Common myeloid progenitor, CD34-positive (primary cell): ENCODE measurements at regions of chr14 and their contacts with region 1.

Region 1: DNA sequence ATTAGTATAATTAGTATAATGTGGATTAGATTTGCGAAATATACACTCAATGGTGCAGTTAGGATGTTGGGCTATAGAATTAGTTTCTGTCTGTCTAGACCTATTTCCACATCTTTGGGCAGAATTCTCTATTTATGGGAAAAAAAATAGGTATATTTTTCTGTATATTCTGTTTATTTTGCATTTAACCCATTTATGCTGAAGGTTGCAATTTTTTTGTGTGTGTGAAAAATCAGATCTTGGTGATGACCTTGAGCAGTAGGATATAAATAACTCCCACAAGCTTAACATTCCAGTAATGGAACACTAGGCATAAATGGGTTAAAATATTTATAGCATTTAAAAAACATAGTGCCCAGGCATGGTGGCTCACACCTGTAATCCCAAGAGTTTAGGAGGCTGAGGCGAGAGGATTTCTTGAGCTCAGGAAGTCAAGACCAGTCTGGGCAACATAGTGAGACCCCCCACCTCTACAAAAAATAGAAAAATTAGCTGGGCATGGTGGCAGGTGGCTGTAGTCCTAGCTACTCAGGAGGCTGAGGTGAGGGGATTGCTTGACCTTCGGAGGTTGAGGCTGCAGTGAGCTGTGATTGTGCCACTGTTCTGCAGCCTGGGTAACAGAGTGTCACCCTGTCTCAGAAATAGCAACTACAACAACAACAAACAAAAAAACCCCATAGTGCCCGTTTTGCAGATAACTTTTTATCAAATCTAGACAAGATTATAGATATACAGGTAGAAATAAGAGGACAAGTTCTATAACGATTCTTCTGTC is 9.3 kb downstream of the BRMS1L start:
- DNase-seq: no peak
- H3K4me3 ChIP-seq: no peak overlapping the region
- H3K27ac ChIP-seq: no peak overlapping the region
- H3K4me1 ChIP-seq: no peaks in the 10 kb centered on the region
- H3K27me3 ChIP-seq: no peaks in the 10 kb centered on the region

Region 2: DNA sequence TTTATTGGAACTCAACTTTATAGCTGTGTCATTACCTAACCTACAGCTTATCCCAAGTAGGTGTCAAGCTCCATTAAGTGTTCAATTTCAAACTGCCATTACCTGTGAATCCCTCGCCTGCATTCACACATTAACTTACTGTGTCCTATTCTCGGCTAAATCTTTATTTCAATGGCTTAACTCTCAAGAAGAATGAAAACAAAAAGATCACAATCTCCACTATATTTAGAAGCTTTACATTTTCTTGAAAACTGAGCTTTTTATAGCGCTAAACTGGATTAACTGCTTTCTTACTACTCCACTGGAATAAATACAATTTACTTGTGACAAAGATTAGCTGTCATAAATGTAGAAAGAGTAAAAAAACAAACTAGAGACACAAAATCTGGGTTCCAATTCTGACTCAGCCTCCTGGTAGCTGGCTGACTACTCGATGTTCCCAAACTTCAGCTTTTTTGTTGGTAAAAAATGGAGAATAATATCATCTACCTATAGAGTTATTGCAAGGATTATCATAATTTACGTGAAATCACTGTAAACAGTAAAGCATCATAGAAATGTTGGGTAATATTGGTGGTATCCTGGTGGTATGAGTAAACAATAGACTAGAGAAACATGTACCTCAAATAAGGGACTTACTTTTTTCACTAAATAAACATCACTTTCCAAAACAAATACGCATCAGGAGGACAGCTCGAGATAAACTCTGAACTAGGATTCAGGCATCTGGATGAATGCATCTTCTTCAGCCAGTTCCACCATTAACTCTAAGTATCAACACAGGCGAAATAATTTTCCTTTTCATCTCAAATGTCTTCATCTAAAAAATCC is 28.0 kb before region 1 on chr14:
- CTCF ChIA-PET with region 1: no interaction called
- POLR2A ChIA-PET with region 1: no interaction called
- DNase-seq: no peak
- H3K4me3 ChIP-seq: peak overlapping the region in 4 of 7 experiments; percentile 49 to 96 (median 82)
- H3K27ac ChIP-seq: no peak overlapping the region
- H3K4me1 ChIP-seq: peaks cover 0 to 14% (median 12%) of the 10 kb centered on the region in 4 experiments
- H3K27me3 ChIP-seq: no peaks in the 10 kb centered on the region

Region 3: GRCh38 chr14:35821546-35822411 is 13.6 kb before region 1 on chr14:
- CTCF ChIA-PET with region 1: interaction called, 10 read pairs
- POLR2A ChIA-PET with region 1: no interaction called
- DNase-seq: peak; percentile 42 to 51 (median 42)
- H3K4me3 ChIP-seq: no peak overlapping the region
- H3K27ac ChIP-seq: no peak overlapping the region
- H3K4me1 ChIP-seq: peaks cover 2 to 7% (median 4%) of the 10 kb centered on the region in 4 experiments
- H3K27me3 ChIP-seq: peaks cover 0 to 2% (median 0%) of the 10 kb centered on the region in 5 experiments